ENCODE measurements at regions of chr1 and their contacts with region 1.

Region 1: GRCh38 chr1:110053557-110054428 is 16.7 kb downstream of the ALX3 start:
- DNase-seq: peak; percentile 71
- H3K4me3 ChIP-seq: no peak overlapping the region; a peak in 1 of 4 replicates
- H3K27ac ChIP-seq: peak overlapping the region in 1 of 2 experiments; percentile 93; a peak in 2 of 4 replicates
- H3K4me1 ChIP-seq: peaks cover 60 to 79% of the 10 kb centered on the region in 2 experiments
- H3K27me3 ChIP-seq: no peaks in the 10 kb centered on the region
- CTCF ChIP-seq: peak; percentile 96
- EP300 ChIP-seq: no peak
- RAD21 ChIP-seq: peak; percentile 98

Region 2: DNA sequence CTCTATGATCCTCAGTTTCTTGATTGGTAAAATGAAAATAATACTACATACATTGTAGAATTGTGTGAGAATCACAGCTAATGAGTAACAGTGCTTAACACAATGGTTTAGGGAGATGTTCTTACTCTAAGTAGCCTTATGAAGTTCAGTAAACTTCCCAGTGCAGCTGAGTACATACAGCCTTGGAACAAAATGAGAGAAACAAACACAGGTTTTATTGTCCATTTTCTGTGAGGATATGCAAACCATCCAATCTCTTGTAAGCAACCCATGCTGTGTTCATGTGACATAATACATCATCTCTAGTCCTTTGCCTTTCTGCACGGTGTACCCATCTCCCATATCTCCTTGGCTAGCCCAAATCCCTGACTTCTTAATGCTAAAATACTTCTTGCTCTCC is 34.0 kb before region 1 on chr1:
- CTCF ChIA-PET with region 1: interaction called, 12 read pairs
- POLR2A ChIA-PET with region 1: no interaction called
- DNase-seq: no peak
- H3K4me3 ChIP-seq: no peak overlapping the region
- H3K27ac ChIP-seq: no peak overlapping the region; a peak in 1 of 4 replicates
- H3K4me1 ChIP-seq: peaks cover 0 to 6% of the 10 kb centered on the region in 2 experiments; a peak in 1 of 4 replicates
- H3K27me3 ChIP-seq: no peaks in the 10 kb centered on the region
- CTCF ChIP-seq: no peak
- EP300 ChIP-seq: no peak
- RAD21 ChIP-seq: no peak

Region 3: GRCh38 chr1:110040548-110040947 is 13.2 kb before region 1 on chr1:
- CTCF ChIA-PET with region 1: interaction called, 29 read pairs
- POLR2A ChIA-PET with region 1: interaction called, 16 read pairs
- DNase-seq: no peak
- H3K4me3 ChIP-seq: no peak overlapping the region
- H3K27ac ChIP-seq: no peak overlapping the region
- H3K4me1 ChIP-seq: peaks cover 4 to 6% of the 10 kb centered on the region in 2 experiments; a peak in 2 of 4 replicates
- H3K27me3 ChIP-seq: no peaks in the 10 kb centered on the region
- CTCF ChIP-seq: no peak
- EP300 ChIP-seq: no peak
- RAD21 ChIP-seq: no peak

Region 4: GRCh38 chr1:110135268-110136065 is 81.7 kb after region 1 on chr1:
- CTCF ChIA-PET with region 1: interaction called, 11 read pairs
- POLR2A ChIA-PET with region 1: no interaction called
- DNase-seq: no peak
- H3K4me3 ChIP-seq: no peak overlapping the region
- H3K27ac ChIP-seq: no peak overlapping the region
- H3K4me1 ChIP-seq: peaks cover 0 to 33% of the 10 kb centered on the region in 2 experiments; a peak in 1 of 4 replicates
- H3K27me3 ChIP-seq: peaks cover 20% of the 10 kb centered on the region; the same call in 1 of the 2 replicates
- CTCF ChIP-seq: no peak
- EP300 ChIP-seq: no peak
- RAD21 ChIP-seq: no peak

Region 5: DNA sequence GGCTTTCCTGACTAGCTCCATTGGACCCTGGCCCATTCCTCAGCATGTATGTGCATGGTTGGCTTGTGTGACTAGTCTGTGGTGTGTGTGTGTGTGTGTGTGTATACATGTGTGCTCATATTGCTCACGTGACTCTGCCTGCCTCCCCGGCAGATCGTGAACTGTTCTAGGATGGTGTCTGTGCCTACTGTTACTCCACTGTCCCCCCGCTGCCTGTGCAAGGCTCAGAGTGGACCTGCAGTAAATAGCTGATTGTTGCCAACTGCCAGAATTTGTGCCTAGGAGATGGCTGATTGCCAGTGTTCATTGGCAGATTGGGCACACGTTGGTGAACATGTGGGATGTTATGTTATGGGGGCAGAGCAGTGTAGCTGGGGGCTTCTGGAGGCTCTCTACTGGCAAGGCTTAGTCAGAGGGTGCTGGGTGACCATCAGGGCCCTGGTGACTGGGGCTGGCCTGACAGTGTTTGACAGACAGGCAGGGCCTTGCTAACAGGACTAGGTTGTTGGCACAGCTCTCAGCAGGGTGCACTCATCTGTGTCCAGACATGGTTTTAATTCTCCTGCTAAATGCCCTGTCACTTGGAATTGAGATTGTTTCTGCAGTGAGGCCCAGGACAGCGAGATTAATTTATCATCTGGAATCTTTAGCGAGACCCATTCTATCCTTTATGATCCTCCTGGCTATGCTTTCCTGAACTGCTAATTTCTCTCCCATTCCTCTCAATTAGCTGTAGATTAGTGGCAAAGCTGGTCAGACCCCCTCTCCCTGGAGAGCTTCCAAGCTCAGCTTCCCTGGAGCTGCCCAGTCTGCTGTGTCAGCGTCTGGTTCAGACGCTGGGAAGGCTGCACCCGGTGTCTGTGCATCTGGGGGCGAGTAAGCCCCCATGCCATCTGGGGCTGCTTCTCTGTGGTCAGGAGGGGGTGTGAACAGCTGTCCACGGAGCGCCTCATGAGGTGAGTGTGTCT is 117.3 kb after region 1 on chr1:
- CTCF ChIA-PET with region 1: interaction called, 30 read pairs
- POLR2A ChIA-PET with region 1: interaction called, 5 read pairs
- DNase-seq: peak; percentile 88
- H3K4me3 ChIP-seq: no peak overlapping the region
- H3K27ac ChIP-seq: peak overlapping the region in 1 of 2 experiments; percentile 96; a peak in 2 of 4 replicates
- H3K4me1 ChIP-seq: peaks cover 0 to 72% of the 10 kb centered on the region in 2 experiments; a peak in 2 of 4 replicates
- H3K27me3 ChIP-seq: no peaks in the 10 kb centered on the region
- CTCF ChIP-seq: no peak
- EP300 ChIP-seq: peak in 1 of 2 experiments; percentile 95; a peak in 2 of 4 replicates
- RAD21 ChIP-seq: peak; percentile 17

Region 6: GRCh38 chr1:110188035-110188618 is 134.3 kb after region 1 on chr1:
- CTCF ChIA-PET with region 1: interaction called, 20 read pairs
- POLR2A ChIA-PET with region 1: interaction called, 8 read pairs
- DNase-seq: peak; percentile 77
- H3K4me3 ChIP-seq: no peak overlapping the region
- H3K27ac ChIP-seq: peak overlapping the region in 1 of 2 experiments; percentile 95; a peak in 2 of 4 replicates
- H3K4me1 ChIP-seq: peaks cover 4 to 55% of the 10 kb centered on the region in 2 experiments; a peak in 2 of 4 replicates
- H3K27me3 ChIP-seq: no peaks in the 10 kb centered on the region
- CTCF ChIP-seq: no peak
- EP300 ChIP-seq: peak in 1 of 2 experiments; percentile 93; a peak in 2 of 4 replicates
- RAD21 ChIP-seq: no peak

Region 7: DNA sequence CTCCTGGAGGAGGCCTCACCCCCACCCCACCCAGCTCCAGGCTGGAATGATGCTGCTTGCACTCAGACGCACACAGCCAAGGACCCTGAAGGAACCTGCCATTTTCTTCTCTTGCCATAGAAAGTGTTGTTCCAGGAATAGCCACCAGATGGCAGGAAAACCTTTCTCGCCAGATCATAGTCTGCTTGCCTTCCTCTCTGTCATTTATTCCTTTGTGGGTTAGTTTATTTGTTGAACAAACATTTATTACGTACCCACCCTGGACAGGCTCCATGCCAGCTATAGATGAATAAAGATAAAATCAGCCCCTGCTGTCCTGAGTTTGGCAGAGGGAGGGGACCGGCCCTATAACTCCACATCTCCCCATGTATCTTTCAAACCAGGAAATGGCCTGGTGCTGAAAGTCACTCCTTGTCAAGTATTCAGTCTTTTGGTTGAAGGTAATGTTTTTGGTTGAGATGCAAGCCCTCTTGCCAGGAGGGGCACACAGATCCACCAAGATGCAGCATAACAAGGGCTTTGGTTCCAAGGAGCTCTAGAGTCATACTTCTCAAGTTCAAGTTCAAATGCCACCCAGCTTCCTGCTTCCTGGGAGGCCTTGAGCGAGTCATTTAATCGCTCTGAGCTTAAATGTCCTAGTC is 149.3 kb after region 1 on chr1:
- CTCF ChIA-PET with region 1: interaction called, 42 read pairs
- POLR2A ChIA-PET with region 1: no interaction called
- DNase-seq: peak; percentile 72
- H3K4me3 ChIP-seq: no peak overlapping the region; a peak in 1 of 4 replicates
- H3K27ac ChIP-seq: no peak overlapping the region
- H3K4me1 ChIP-seq: peaks cover 0 to 25% of the 10 kb centered on the region in 2 experiments; a peak in 1 of 4 replicates
- H3K27me3 ChIP-seq: no peaks in the 10 kb centered on the region
- CTCF ChIP-seq: peak; percentile 84
- EP300 ChIP-seq: no peak
- RAD21 ChIP-seq: peak; percentile 89